ENCODE measurements at regions of chr3 and their contacts with region 1.

Region 1: GRCh38 chr3:150666167-150666566 is 37.6 kb downstream of the ERICH6 start:
- DNase-seq: no peak
- H3K4me3 ChIP-seq: no peak overlapping the region
- H3K27ac ChIP-seq: no peak overlapping the region
- H3K4me1 ChIP-seq: no peaks in the 10 kb centered on the region
- CTCF ChIP-seq: no peak

Region 2: GRCh38 chr3:150613709-150614480 is 52.3 kb before region 1 on chr3:
- CTCF ChIA-PET with region 1: no interaction called
- POLR2A ChIA-PET with region 1: no interaction called
- intact Hi-C with region 1: no loop called
- DNase-seq: no peak
- H3K4me3 ChIP-seq: no peak overlapping the region
- H3K27ac ChIP-seq: no peak overlapping the region
- H3K4me1 ChIP-seq: peaks cover 19% of the 10 kb centered on the region
- CTCF ChIP-seq: no peak

Region 3: GRCh38 chr3:150635526-150635925 is 30.6 kb before region 1 on chr3:
- CTCF ChIA-PET with region 1: no interaction called
- POLR2A ChIA-PET with region 1: interaction called, 10 read pairs
- intact Hi-C with region 1: no loop called
- DNase-seq: peak; percentile 38
- H3K4me3 ChIP-seq: no peak overlapping the region
- H3K27ac ChIP-seq: no peak overlapping the region
- H3K4me1 ChIP-seq: no peaks in the 10 kb centered on the region
- CTCF ChIP-seq: no peak